CD8-positive, alpha-beta T cell (primary cell): ENCODE measurements at regions of chr12 and their contacts with region 1.

Region 1: GRCh38 chr12:52561880-52562449 is 9.0 kb upstream of the KRT71 start:
- DNase-seq: no peak
- ATAC-seq: no peak
- H3K4me3 ChIP-seq: no peak overlapping the region
- H3K4me3 Mint-ChIP-seq: no peak overlapping the region
- H3K27ac ChIP-seq: no peak overlapping the region
- H3K27ac Mint-ChIP-seq: no peak overlapping the region
- H3K4me1 ChIP-seq: peaks cover 5% of the 10 kb centered on the region
- H3K4me1 Mint-ChIP-seq: peaks cover 12% of the 10 kb centered on the region
- H3K27me3 ChIP-seq: no peaks in the 10 kb centered on the region
- H3K27me3 Mint-ChIP-seq: peaks cover 14% of the 10 kb centered on the region
- CTCF ChIP-seq: no peak

Region 2: DNA sequence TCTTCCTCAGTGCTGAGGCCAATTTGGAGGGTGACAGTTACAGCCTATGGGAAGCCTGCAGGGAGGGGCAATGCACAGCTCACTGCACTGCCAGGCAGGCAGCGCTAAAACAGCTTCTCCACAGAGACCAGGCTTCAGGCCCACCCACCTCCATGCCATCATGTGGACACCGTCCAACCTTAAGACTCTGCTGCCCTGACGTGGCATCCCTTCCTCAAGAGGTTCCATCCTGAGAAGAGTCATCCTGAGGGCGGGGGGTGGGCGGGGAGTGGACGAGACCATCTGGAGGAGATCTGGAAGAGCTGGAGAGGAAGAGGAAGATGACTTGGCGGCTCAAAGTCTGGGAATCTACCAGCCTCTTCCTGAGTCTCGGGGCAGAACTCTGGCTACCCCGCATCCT is 663.0 kb before region 1 on chr12:
- CTCF ChIA-PET with region 1: no interaction called
- POLR2A ChIA-PET with region 1: no interaction called
- intact Hi-C with region 1: loop called in 1 of 2 experiments (anchors 5 kb)
- DNase-seq: no peak
- ATAC-seq: no peak
- H3K4me3 ChIP-seq: no peak overlapping the region
- H3K4me3 Mint-ChIP-seq: no peak overlapping the region
- H3K27ac ChIP-seq: no peak overlapping the region
- H3K27ac Mint-ChIP-seq: no peak overlapping the region
- H3K4me1 ChIP-seq: no peaks in the 10 kb centered on the region
- H3K4me1 Mint-ChIP-seq: no peaks in the 10 kb centered on the region
- H3K27me3 ChIP-seq: no peaks in the 10 kb centered on the region
- H3K27me3 Mint-ChIP-seq: peaks cover 5% of the 10 kb centered on the region
- CTCF ChIP-seq: no peak

Region 3: GRCh38 chr12:52486166-52487105 is 75.5 kb before region 1 on chr12:
- CTCF ChIA-PET with region 1: no interaction called
- POLR2A ChIA-PET with region 1: no interaction called
- intact Hi-C with region 1: no loop called
- DNase-seq: no peak
- ATAC-seq: no peak
- H3K4me3 ChIP-seq: no peak overlapping the region
- H3K4me3 Mint-ChIP-seq: no peak overlapping the region
- H3K27ac ChIP-seq: no peak overlapping the region
- H3K27ac Mint-ChIP-seq: no peak overlapping the region
- H3K4me1 ChIP-seq: no peaks in the 10 kb centered on the region
- H3K4me1 Mint-ChIP-seq: no peaks in the 10 kb centered on the region
- H3K27me3 ChIP-seq: no peaks in the 10 kb centered on the region
- H3K27me3 Mint-ChIP-seq: peaks cover 48% of the 10 kb centered on the region
- CTCF ChIP-seq: no peak